ENCODE measurements at regions of chr3 and their contacts with region 1.

Region 1: DNA sequence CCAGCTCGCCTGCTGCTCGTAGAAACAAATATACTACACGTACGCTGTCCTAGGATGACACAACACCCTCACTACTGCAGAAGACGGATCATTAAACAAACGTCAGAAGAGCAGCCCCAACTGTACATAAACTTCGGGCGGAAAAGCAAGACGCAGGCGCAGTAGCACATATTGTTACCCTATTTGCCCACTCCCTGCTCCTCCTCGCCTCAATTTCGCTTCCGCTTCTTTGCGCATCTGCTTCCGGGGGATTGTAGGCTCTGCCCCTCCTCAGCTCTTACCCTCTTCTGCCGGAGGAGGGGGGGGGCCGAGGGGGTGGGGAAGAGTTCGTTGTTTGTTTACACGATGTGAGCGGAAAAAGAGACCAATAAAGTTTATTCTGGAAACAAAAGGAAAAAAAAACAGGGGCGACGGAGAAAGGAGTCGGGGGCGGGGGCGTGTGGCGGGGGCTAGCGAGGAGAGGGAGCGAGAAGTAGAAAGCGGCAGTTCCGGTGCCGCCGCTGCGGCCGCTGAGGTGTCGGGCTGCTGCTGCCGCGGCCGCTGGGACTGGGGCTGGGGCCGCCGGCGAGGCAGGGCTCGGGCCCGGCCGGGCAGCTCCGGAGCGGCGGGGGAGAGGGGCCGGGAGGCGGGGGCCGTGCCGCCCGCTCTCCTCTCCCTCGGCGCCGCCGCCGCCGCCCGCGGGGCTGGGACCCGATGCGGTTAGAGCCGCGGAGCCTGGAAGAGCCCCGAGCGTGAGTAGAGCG is at the start of gene PIK3CA:
- DNase-seq: peak; percentile 98
- ATAC-seq: peak; percentile 82
- H3K4me3 ChIP-seq: peak within 1 kb of the TSS; percentile 91
- H3K27ac ChIP-seq: peak within 1 kb of the TSS; percentile 29
- H3K4me1 ChIP-seq: peaks cover 12% of the 10 kb centered on the region; the same call in 1 of the 2 replicates
- H3K27me3 ChIP-seq: no peaks in the 10 kb centered on the region
- CTCF ChIP-seq: no peak
- total RNA-seq, gene PIK3CA: 13.4 and 20.5 TPM in 2 replicates

Region 2: GRCh38 chr3:179071550-179072397 is 76.3 kb before region 1 on chr3 and contains the start of gene ZMAT3:
- CTCF ChIA-PET with region 1: no interaction called
- POLR2A ChIA-PET with region 1: no interaction called
- intact Hi-C with region 1: loop called (anchors 1 kb)
- DNase-seq: peak; percentile 83
- ATAC-seq: peak; percentile 91
- H3K4me3 ChIP-seq: peak within 1 kb of the TSS; percentile 82
- H3K27ac ChIP-seq: peak within 1 kb of the TSS; percentile 27
- H3K4me1 ChIP-seq: peaks cover 9% of the 10 kb centered on the region
- H3K27me3 ChIP-seq: no peaks in the 10 kb centered on the region
- CTCF ChIP-seq: no peak
- total RNA-seq, gene ZMAT3: 2.0 and 2.9 TPM in 2 replicates

Region 3: DNA sequence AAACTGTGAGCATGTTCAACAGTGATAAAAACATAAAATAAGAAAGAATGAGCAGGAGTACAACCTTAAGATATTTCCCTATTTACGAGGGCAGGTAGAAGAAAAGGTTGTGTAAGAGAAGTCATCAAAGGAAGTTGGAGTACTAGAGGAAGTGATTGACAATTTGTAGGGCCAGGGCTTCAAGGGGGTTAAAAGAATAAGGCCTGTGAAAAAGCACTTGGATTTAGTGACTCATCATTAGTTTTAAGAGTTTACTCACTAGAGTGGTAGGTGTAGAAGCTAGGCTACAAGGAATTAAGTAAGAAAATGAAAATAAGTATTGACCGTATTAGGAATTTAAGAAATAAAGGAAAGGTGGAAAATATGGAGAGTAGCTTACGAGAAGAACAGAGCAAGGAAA is 79.3 kb after region 1 on chr3:
- CTCF ChIA-PET with region 1: no interaction called
- POLR2A ChIA-PET with region 1: no interaction called
- intact Hi-C with region 1: loop called (anchors 10 kb)
- DNase-seq: peak; percentile 66
- ATAC-seq: peak; percentile 99
- H3K4me3 ChIP-seq: no peak overlapping the region
- H3K27ac ChIP-seq: no peak overlapping the region
- H3K4me1 ChIP-seq: peaks cover 6% of the 10 kb centered on the region
- H3K27me3 ChIP-seq: no peaks in the 10 kb centered on the region
- CTCF ChIP-seq: no peak

Region 4: DNA sequence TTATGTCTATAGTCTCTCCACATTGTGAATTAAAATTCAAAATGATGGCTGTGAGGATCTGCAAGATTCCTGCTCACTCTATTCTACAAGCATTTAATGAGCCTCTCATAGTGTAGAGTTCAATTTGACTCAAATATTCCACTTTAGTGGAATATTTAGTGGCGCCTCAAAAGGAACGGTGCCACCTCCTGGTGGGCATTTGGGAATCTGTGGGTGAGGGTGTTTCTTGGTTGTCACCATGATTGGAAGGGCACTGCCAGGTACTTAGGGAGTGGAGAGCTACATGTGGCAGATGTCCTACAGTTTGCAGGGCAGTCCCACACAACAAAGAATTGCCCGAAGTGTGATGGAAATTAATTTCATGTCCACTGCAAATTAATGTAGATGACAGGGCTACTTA is 124.3 kb after region 1 on chr3:
- CTCF ChIA-PET with region 1: no interaction called
- POLR2A ChIA-PET with region 1: no interaction called
- intact Hi-C with region 1: loop called (anchors 1 kb)
- DNase-seq: peak; percentile 46
- ATAC-seq: peak; percentile 68
- H3K4me3 ChIP-seq: no peak overlapping the region
- H3K27ac ChIP-seq: no peak overlapping the region
- H3K4me1 ChIP-seq: no peaks in the 10 kb centered on the region
- H3K27me3 ChIP-seq: no peaks in the 10 kb centered on the region
- CTCF ChIP-seq: peak; percentile 64

Region 5: DNA sequence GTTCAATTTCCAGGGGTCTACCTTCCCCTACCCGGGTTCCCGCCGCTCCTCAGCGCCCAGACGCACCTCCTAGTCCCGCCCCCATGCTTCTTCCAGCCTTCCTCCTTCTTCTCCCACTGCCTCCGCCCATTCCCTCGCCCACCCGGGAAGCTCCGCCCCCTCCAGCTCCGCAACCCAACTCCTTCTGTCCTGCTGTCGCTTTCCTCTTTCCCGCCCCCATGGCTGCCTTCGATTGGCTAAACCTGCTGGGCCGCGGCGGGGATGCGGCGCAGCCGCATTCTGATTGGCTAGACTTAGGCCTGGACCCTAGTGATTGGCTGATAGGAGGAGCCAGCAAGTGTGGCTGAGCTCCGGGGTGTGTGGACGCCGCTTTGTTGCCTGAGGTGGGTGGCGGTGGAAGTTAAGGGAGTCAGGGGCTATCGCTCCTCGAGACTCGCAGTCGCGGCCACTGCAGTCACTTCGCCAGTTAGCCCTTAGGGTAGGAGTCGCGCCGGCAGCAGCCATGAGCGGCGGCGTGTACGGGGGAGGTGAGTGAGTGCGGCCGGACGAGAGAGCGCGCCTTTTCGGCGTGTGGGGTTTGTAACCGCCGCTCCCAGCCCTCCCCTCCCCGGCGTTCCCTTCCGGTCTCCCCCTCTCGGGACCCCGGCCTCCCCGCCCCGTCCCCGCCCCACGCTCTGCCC is 414.7 kb after region 1 on chr3 and contains the start of gene ACTL6A:
- CTCF ChIA-PET with region 1: no interaction called
- POLR2A ChIA-PET with region 1: no interaction called
- intact Hi-C with region 1: loop called (anchors 5 kb)
- DNase-seq: peak; percentile 100
- ATAC-seq: peak; percentile 94
- H3K4me3 ChIP-seq: peak within 1 kb of the TSS; percentile 89
- H3K27ac ChIP-seq: peak within 1 kb of the TSS; percentile 49
- H3K4me1 ChIP-seq: peaks cover 23% of the 10 kb centered on the region
- H3K27me3 ChIP-seq: no peaks in the 10 kb centered on the region
- CTCF ChIP-seq: no peak
- total RNA-seq, gene ACTL6A: 102 and 105 TPM in 2 replicates